ENCODE measurements at regions of chr2 and their contacts with region 1.

Region 1: GRCh38 chr2:46364797-46365457 is 67.7 kb downstream of the EPAS1 start:
- DNase-seq: no peak
- H3K4me3 ChIP-seq: no peak overlapping the region
- H3K27ac ChIP-seq: no peak overlapping the region
- H3K4me1 ChIP-seq: peaks cover 0 to 8% of the 10 kb centered on the region in 2 donors
- H3K27me3 ChIP-seq: no peaks in the 10 kb centered on the region
- CTCF ChIP-seq: peak; percentile 68 to 86 (median 78)

Region 2: GRCh38 chr2:45993476-45993991 is 371.4 kb before region 1 on chr2:
- intact Hi-C with region 1: loop called (anchors 1 kb)
- DNase-seq: peak in 1 of 2 donors; percentile 83
- H3K4me3 ChIP-seq: no peak overlapping the region
- H3K27ac ChIP-seq: peak overlapping the region; percentile 74 to 75
- H3K4me1 ChIP-seq: peaks cover 3 to 23% of the 10 kb centered on the region in 2 donors
- H3K27me3 ChIP-seq: no peaks in the 10 kb centered on the region
- CTCF ChIP-seq: peak; percentile 58 to 87 (median 79)

Region 3: GRCh38 chr2:46010925-46011490 is 353.9 kb before region 1 on chr2:
- intact Hi-C with region 1: loop called (anchors 5 kb)
- DNase-seq: no peak
- H3K4me3 ChIP-seq: no peak overlapping the region
- H3K27ac ChIP-seq: no peak overlapping the region
- H3K4me1 ChIP-seq: peaks cover 0 to 14% of the 10 kb centered on the region in 2 donors
- H3K27me3 ChIP-seq: no peaks in the 10 kb centered on the region
- CTCF ChIP-seq: peak; percentile 51 to 68 (median 65)

Region 4: GRCh38 chr2:46062637-46063412 is 302.1 kb before region 1 on chr2:
- intact Hi-C with region 1: loop called (anchors 1 kb)
- DNase-seq: peak; percentile 12 to 93
- H3K4me3 ChIP-seq: no peak overlapping the region
- H3K27ac ChIP-seq: no peak overlapping the region
- H3K4me1 ChIP-seq: peaks cover 3 to 4% of the 10 kb centered on the region in 2 donors
- H3K27me3 ChIP-seq: no peaks in the 10 kb centered on the region
- CTCF ChIP-seq: peak; percentile 83 to 94 (median 88)

Region 5: DNA sequence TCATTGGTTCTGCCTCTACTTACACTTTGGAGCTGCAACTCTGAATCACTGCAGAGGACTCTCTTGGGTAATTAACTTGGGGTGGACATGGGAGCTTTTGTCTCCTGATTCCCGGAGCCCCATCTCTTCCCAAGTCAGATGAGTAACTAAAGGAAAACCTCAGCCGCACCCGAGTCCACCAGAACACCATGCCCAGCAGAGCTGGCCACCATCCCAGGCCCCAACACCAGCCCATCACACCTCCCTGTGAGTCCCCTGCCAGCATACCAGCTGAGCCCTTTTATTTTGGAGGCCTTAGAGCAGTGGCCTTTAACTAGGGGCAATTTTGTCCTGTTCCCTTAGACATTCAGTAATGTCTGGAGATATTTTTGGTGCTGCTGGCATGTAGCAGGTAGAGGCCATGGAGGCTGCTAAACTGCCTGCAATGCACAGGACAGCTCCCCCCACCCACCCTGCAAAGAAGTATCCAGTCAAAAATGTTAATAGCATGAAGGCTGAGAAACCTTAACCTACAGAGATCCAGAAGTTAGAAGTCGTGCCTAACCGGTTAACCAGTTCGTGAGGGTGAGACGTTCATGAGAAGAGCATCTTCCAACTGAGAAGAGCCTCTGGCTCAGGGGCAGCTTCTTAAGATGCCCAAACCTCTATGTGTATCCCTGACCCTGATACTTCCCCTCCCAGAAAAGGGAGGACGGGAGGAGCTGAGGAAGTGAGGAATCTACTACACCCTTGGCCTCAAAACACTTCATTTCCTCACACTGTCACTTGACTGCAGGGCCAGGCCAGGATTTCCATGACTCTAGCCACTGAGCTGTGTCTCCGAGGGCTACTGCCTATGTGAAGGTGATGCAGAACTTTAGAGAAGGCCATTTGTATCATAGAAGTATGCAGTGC is 207.6 kb before region 1 on chr2:
- intact Hi-C with region 1: no loop called
- DNase-seq: no peak
- H3K4me3 ChIP-seq: no peak overlapping the region
- H3K27ac ChIP-seq: peak overlapping the region; percentile 49 to 68
- H3K4me1 ChIP-seq: peaks cover 12 to 23% of the 10 kb centered on the region in 2 donors
- H3K27me3 ChIP-seq: no peaks in the 10 kb centered on the region
- CTCF ChIP-seq: no peak

Region 6: GRCh38 chr2:46230115-46230571 is 134.8 kb before region 1 on chr2:
- intact Hi-C with region 1: loop called (anchors 5 kb)
- DNase-seq: peak in 1 of 2 donors; percentile 74
- H3K4me3 ChIP-seq: no peak overlapping the region
- H3K27ac ChIP-seq: peak overlapping the region; percentile 24 to 42
- H3K4me1 ChIP-seq: peaks cover 0 to 8% of the 10 kb centered on the region in 2 donors
- H3K27me3 ChIP-seq: no peaks in the 10 kb centered on the region
- CTCF ChIP-seq: peak in 2 of 3 experiments; percentile 53 to 54

Region 7: DNA sequence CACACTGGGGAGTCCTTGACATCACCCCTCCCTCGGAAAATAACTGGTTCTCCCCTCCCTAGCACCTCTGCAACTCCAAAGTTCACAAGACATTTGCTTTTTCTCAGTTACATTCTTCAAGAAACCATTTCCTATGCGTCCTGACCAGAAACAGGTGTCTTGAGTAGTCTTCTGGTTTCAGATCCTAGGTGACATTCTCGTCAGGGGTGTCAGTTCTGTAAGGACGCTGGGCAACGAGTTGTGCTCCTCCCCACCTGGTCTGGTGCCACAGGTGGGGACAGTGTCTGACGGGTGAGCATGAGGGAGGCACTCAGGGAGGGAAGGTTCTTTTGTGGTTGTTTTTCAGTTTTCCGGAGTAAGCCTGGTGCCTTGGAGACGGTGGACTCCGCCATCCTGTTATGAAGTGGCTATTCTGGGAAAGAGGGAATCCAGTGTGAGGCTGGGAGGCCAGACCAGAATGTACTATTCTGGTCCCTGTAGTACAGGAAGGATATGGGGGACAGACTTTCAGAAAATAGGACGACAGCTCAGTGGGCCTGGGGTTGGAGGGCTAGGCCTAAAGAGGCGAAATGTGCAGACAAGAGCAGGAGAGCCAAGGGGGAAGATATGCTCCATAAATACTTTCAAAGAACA is 17.2 kb before region 1 on chr2:
- intact Hi-C with region 1: loop called (anchors 2 kb)
- DNase-seq: no peak
- H3K4me3 ChIP-seq: no peak overlapping the region
- H3K27ac ChIP-seq: no peak overlapping the region
- H3K4me1 ChIP-seq: peaks cover 5 to 44% of the 10 kb centered on the region in 2 donors
- H3K27me3 ChIP-seq: no peaks in the 10 kb centered on the region
- CTCF ChIP-seq: no peak

Measured in ascending aorta (tissue), 2 donors.